Psoas muscle (tissue), 8 donors: ENCODE measurements at regions of chr9 and their contacts with region 1.

Region 1: GRCh38 chr9:38392235-38393127 is at the start of gene ALDH1B1:
- DNase-seq: peak; percentile 87 to 90
- ATAC-seq: peak; percentile 94 to 99 (median 97)
- H3K4me3 ChIP-seq: peak within 1 kb of the TSS; percentile 92
- H3K27ac ChIP-seq: peak within 1 kb of the TSS; percentile 93
- H3K4me1 ChIP-seq: peaks cover 33% of the 10 kb centered on the region
- H3K27me3 ChIP-seq: no peaks in the 10 kb centered on the region
- CTCF ChIP-seq: no peak
- total RNA-seq, gene ALDH1B1: 24.9 to 120 (median 107) TPM

Region 2: DNA sequence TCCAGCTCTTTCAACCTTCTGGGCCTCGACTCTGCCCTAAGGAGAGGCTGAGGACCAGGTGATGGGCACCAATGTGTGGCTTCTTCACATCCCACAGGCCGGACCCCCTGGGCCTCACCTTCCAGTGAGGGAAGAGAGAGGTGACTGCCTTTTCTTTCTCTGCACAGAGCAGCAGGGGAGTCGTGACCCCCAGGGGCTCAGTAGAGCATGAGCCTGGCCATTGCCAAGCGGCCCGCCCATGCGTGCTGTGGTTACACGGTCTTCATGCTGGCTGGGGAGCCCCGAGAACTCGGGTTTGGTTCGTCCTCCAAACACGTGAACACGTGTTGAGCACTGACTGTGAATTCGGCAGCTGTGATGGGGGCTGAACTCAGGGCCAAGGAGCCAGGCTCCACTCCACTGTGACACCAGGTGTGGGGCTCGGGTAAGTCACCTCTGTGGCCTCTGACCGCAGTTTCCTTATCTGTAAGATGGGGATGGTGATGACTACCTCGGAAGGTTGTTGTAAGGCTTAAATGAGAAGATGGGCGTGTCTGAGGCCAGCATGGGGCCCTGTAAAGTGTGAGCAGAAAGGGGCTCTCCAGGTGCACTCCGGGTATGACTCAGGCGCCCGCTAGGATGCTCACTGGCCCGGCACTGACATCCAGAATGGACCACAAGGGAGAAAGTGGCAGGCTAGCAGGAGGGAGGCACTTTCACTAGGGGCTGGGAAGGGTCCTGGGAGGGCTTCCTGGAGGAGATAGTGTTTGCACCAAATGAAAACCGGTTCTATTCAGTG is 983.4 kb before region 1 on chr9:
- intact Hi-C with region 1: loop called in 1 of 2 experiments (anchors 10 kb)
- DNase-seq: no peak
- ATAC-seq: no peak
- H3K4me3 ChIP-seq: no peak overlapping the region
- H3K27ac ChIP-seq: no peak overlapping the region
- H3K4me1 ChIP-seq: peaks cover 18% of the 10 kb centered on the region
- H3K27me3 ChIP-seq: no peaks in the 10 kb centered on the region
- CTCF ChIP-seq: no peak

Region 3: GRCh38 chr9:37485389-37486219 is 906.9 kb before region 1 on chr9 and contains the start of gene POLR1E:
- intact Hi-C with region 1: loop called in 1 of 2 experiments (anchors 10 kb)
- DNase-seq: peak; percentile 94 to 97
- ATAC-seq: peak; percentile 98 to 100 (median 99)
- H3K4me3 ChIP-seq: peak within 1 kb of the TSS; percentile 85
- H3K27ac ChIP-seq: peak within 1 kb of the TSS; percentile 92
- H3K4me1 ChIP-seq: peaks cover 11% of the 10 kb centered on the region
- H3K27me3 ChIP-seq: no peaks in the 10 kb centered on the region
- CTCF ChIP-seq: no peak
- total RNA-seq, gene POLR1E: 17.6 to 22.5 (median 21.8) TPM

Region 4: DNA sequence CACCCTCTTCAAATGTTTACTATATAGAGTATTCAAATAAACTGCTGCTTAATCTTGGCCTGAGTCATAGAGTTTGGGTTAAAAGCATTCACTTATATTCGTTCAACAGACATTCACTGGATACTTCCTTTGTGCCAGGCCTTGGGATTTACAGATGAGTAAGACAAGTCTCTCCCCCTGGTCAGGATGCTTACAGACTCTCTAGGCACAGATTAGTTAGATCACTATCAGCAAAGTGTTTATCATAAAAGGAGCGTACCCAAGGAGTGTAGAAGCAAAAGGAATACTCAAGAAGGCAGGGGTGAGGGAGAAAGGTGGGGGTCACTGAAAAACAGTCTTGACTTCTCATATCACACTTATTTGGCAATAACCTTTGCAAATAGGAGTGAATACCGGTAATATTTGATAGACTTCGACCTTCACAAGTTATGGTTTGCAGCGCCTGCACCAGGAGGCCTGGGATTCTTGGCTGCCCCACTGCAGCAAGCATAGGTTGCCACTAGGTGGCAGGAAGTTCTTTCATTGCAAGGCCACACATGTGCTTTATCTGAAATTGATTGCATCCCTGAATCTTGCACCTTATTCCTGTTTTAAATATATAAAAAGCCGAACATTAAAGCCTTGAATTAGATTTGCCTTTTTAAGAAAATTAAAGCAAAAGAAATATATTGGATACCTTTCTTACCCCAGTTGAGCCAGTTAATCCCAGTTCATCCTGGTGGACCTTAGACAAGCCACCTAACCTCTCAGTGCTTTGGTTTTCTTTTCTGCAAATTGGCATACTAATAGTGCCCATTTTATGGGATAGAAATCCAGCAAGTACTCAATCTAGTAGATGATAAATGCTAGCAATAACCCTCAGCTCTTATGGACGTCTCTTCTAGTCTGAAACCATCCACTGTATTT is 645.4 kb before region 1 on chr9:
- intact Hi-C with region 1: loop called in 1 of 2 experiments (anchors 10 kb)
- DNase-seq: peak in 1 of 2 donors; percentile 49
- ATAC-seq: peak; percentile 73 to 92 (median 82)
- H3K4me3 ChIP-seq: no peak overlapping the region
- H3K27ac ChIP-seq: no peak overlapping the region
- H3K4me1 ChIP-seq: no peaks in the 10 kb centered on the region
- H3K27me3 ChIP-seq: no peaks in the 10 kb centered on the region
- CTCF ChIP-seq: peak; percentile 89

Region 5: GRCh38 chr9:37903647-37904444 is 488.6 kb before region 1 on chr9 and contains the start of gene SLC25A51:
- intact Hi-C with region 1: loop called in 1 of 2 experiments (anchors 10 kb)
- DNase-seq: peak; percentile 96
- ATAC-seq: peak; percentile 93 to 96 (median 94)
- H3K4me3 ChIP-seq: peak within 1 kb of the TSS; percentile 96
- H3K27ac ChIP-seq: peak within 1 kb of the TSS; percentile 78
- H3K4me1 ChIP-seq: peaks cover 21% of the 10 kb centered on the region
- H3K27me3 ChIP-seq: no peaks in the 10 kb centered on the region
- CTCF ChIP-seq: peak; percentile 91
- total RNA-seq, gene SLC25A51: 16.3 to 25.3 (median 18.4) TPM

Region 6: DNA sequence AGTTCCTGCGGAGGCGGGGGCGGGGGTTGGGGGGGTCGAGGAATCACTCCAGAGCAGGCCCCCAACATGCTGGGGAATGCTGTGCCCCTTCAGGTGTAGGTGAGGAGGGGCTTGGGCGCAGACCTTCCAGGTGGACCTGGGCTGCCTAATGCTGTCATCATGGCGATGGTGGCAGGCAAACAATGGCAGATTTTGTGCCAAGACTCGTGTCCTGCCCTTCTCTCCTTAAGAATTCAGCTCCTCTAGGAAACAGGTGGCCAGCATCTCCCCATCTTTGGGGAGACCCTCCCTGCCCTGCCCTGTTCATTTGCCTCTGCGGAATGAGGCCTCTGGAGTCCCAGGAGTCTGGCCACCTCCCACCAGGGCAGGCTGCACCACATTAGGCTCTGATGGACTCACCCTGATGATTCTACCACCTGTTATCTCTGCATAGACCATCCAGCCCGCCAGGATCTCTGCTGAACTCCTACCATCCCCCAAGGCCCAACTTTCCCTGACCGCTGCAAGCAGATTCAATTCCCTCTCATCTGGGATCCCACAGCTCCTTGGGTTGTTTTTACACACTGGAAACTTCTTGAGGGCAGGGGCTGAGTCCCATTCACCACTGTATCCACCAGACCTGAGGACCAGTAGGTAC is 477.7 kb before region 1 on chr9:
- intact Hi-C with region 1: no loop called
- DNase-seq: no peak
- ATAC-seq: no peak
- H3K4me3 ChIP-seq: no peak overlapping the region
- H3K27ac ChIP-seq: no peak overlapping the region
- H3K4me1 ChIP-seq: peaks cover 4% of the 10 kb centered on the region
- H3K27me3 ChIP-seq: no peaks in the 10 kb centered on the region
- CTCF ChIP-seq: no peak

Region 7: DNA sequence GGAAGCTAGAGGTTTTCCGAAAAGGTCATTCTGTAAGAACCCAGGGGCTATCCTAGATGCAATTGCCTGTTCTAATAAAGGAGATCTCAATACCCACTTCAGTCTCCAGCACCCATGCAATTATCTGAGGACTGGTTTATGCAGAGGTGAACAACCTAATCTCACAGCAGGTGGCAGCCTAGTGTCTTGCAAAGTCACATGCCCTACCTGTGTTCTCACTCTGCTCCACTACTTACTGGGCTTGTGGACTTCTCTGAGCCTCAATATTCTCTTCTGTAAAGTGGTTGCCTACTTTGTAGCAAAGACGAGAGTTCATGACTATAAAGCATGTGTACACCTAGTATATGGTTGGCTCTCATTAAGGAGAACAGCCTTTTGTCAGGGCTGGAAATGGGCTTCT is 21.0 kb before region 1 on chr9:
- intact Hi-C with region 1: loop called in 1 of 2 experiments (anchors 1 kb)
- DNase-seq: no peak
- ATAC-seq: peak; percentile 80 to 90 (median 85)
- H3K4me3 ChIP-seq: no peak overlapping the region
- H3K27ac ChIP-seq: no peak overlapping the region
- H3K4me1 ChIP-seq: no peaks in the 10 kb centered on the region
- H3K27me3 ChIP-seq: no peaks in the 10 kb centered on the region
- CTCF ChIP-seq: peak; percentile 47